Heart left ventricle (tissue), 16 donors: ENCODE measurements at regions of chr5 and their contacts with region 1.

Region 1: DNA sequence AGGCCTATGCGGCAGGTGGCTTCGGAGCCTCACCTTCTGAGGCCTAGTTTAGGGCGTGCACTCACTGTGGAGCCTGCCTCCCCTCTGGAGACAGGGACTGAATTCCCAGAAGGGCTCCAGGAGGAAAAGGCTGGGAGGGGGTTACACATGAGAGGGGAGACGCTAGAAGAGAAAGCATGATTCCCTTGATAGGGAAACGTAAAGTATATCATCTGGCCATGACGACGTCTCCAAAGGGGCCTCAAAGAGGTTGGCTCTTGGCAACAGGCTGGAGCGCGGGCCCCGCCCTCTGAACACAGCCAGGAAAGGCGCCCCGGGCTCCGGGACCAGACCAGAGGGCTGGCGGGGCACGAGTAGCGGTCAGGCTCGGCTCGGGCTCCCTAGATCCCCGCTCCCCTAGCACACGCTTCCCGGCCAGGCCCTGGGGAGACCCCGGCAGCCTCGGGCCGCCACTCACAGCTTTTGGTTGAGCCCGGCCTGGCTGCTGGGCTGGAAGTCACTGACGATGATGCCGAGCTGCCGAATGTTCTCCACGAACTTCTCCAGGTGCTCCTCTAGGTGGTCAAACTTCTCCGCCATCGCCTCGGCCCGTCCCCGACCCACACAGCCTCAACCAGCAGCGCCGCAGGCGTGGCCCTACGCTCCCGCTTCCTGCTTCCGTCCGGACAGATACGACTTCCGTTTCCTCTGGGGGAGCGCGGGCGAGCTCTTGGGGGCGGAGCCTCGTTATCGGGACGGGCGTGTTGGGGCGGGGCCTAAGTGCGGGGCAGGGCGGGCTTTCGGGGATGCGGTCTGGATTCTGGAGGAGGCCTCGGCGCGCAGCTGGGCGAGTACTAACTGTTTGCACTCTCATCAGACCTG is at the start of gene MED10:
- DNase-seq: peak; percentile 95 to 98 (median 97)
- ATAC-seq: peak; percentile 100
- H3K4me3 ChIP-seq: peak within 1 kb of the TSS; percentile 64 to 99 (median 98)
- H3K27ac ChIP-seq: peak within 1 kb of the TSS; percentile 60 to 95 (median 91)
- H3K4me1 ChIP-seq: peaks cover 0 to 26% (median 16%) of the 10 kb centered on the region in 12 donors
- H3K27me3 ChIP-seq: peaks cover 0 to 3% (median 0%) of the 10 kb centered on the region in 9 donors
- CTCF ChIP-seq: no peak
- POLR2A ChIP-seq: peak in 1 of 2 donors; percentile 73
- total RNA-seq, gene MED10: 13.2 to 30.7 (median 23.1) TPM

Region 2: DNA sequence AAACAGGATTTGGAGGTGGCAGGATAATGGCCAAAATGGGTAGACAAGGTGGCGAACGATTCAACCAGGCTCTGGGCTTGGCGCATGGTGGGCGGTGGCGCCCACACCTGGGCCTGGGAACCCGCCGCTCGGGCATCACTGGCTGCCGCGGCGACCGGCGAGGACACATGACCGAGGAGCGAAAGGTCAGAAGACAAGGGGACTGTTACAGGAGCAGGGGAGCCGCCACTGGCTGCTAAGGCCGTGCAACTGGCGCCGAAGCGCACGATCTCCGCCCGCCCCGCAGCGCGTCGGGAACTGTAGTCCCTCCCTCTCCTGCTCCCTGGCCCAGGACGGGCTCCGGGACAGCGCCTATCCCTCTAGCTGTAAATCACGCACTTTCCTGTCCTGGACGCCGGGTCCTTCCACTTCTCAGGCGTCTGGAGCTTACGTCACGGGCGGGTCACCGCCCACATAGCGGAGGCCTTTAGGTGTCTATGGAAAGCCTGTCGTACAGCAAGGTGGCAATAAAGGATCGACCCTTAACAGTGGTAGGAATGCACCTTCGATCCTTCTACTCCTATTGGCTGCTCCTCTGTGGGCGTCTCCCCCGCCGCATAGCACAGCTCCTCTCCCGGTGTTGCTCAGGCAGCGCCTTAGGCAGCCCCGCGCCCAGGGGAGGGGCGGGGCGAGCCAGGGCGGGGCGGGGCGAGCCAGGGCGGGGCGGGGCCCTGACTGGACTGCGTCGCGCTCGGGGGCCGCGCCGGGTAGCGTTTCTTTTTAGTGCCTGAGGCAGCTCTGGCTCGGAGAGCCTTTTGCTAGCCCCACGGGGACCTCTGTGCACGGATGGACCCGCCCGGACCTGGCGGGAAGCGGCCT is 955.9 kb before region 1 on chr5 and contains the start of gene ICE1:
- intact Hi-C with region 1: loop called in 1 of 10 experiments (anchors 5 kb)
- DNase-seq: peak; percentile 97 to 99 (median 98)
- ATAC-seq: peak; percentile 98 to 99 (median 99)
- H3K4me3 ChIP-seq: peak within 1 kb of the TSS; percentile 62 to 100 (median 94)
- H3K27ac ChIP-seq: peak within 1 kb of the TSS; percentile 92 to 100 (median 97)
- H3K4me1 ChIP-seq: peaks cover 7 to 51% (median 37%) of the 10 kb centered on the region in 12 donors
- H3K27me3 ChIP-seq: no peaks in the 10 kb centered on the region
- CTCF ChIP-seq: peak in 3 of 12 donors; percentile 12 to 18 (median 16)
- POLR2A ChIP-seq: peak in 1 of 2 donors; percentile 75
- total RNA-seq, gene ICE1: 15.0 to 21.4 (median 19.7) TPM

Region 3: GRCh38 chr5:6448622-6449464 is 70.7 kb after region 1 on chr5 and contains the start of gene UBE2QL1:
- intact Hi-C with region 1: loop called in 3 of 10 experiments (anchors 5 to 10 kb)
- DNase-seq: peak in 1 of 5 donors; percentile 40
- ATAC-seq: peak in 3 of 4 donors; percentile 52 to 63 (median 62)
- H3K4me3 ChIP-seq: peak within 1 kb of the TSS; percentile 39 to 76 (median 62)
- H3K27ac ChIP-seq: peak within 1 kb of the TSS in 11 of 12 donors; percentile 37 to 96 (median 80)
- H3K4me1 ChIP-seq: peaks cover 0 to 25% (median 10%) of the 10 kb centered on the region in 12 donors
- H3K27me3 ChIP-seq: peaks cover 0 to 40% (median 6%) of the 10 kb centered on the region in 9 donors
- CTCF ChIP-seq: no peak
- POLR2A ChIP-seq: no peak
- total RNA-seq, gene UBE2QL1: 9.8 to 32.0 (median 21.0) TPM

Region 4: DNA sequence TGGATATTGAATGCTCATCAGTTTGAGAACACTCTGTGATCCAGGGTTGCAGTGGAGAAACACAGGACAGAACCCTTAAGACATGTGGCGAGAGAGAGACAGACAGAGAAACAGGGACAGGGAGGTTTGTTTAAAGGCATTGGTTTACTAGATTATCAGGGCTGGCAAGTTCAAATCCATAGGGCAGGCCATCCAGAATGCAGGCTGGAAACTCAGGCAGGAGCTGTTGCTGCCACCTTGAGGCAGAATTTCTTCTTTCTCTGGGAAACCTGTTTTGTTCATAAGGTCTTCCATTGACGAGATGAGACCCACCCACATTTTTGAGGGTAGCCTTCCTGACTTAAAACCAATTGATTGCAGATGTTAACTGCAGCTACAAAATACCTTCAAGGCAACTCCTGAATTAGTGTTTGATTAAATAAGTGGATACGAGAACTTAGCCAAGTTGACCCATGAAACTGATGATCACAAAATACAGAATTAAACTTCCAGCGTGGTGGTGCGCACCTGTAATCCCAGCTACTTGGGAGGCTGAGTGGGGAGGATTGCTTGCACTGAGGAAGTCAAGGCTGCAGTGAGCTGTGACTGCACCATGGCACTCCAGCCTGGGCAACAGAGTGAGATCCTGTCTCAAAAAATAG is 198.8 kb after region 1 on chr5:
- intact Hi-C with region 1: loop called in 2 of 10 experiments (anchors 10 kb)
- DNase-seq: no peak
- ATAC-seq: peak in 2 of 4 donors; percentile 45 to 53
- H3K4me3 ChIP-seq: no peak overlapping the region
- H3K27ac ChIP-seq: no peak overlapping the region
- H3K4me1 ChIP-seq: peaks cover 0 to 16% (median 4%) of the 10 kb centered on the region in 12 donors
- H3K27me3 ChIP-seq: peaks cover 0 to 7% (median 0%) of the 10 kb centered on the region in 9 donors
- CTCF ChIP-seq: peak; percentile 26 to 63 (median 49)
- POLR2A ChIP-seq: no peak

Region 5: GRCh38 chr5:6632917-6633468 is 254.9 kb after region 1 on chr5 and contains the starts of genes NSUN2 and SRD5A1:
- intact Hi-C with region 1: loop called in 1 of 10 experiments (anchors 10 kb)
- DNase-seq: peak; percentile 92 to 96 (median 92)
- ATAC-seq: peak; percentile 97 to 99 (median 98)
- H3K4me3 ChIP-seq: peak within 1 kb of the TSS; percentile 75 to 99 (median 94)
- H3K27ac ChIP-seq: peak within 1 kb of the TSS; percentile 92 to 99 (median 97)
- H3K4me1 ChIP-seq: peaks cover 0 to 38% (median 25%) of the 10 kb centered on the region in 12 donors
- H3K27me3 ChIP-seq: no peaks in the 10 kb centered on the region
- CTCF ChIP-seq: no peak
- POLR2A ChIP-seq: peak in 1 of 2 donors; percentile 46
- total RNA-seq, gene NSUN2: 25.1 to 42.6 (median 34.0) TPM
- total RNA-seq, gene SRD5A1: 2.3 to 6.7 (median 4.0) TPM

Region 6: DNA sequence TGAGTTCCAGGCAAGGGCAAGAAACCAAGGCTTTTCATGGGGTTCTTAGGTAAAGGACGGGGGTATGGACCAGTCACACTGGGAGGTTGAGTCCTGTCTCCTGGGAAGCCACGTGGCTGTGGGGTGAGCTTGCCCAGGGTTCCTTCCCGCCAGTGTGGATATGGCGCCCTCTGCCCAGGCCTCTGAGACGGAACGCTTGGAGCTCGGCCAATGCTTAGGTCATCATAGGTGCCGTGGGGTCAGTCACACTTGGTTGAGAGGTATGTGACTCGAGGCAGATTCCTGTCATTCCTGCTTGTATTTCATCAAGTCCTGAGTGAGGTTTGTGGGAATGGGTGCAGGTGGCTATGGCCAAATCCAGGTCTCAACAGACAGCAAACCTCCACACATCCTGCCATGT is 381.3 kb after region 1 on chr5:
- intact Hi-C with region 1: loop called in 1 of 10 experiments (anchors 10 kb)
- DNase-seq: peak in 1 of 5 donors; percentile 24
- ATAC-seq: no peak
- H3K4me3 ChIP-seq: no peak overlapping the region
- H3K27ac ChIP-seq: no peak overlapping the region
- H3K4me1 ChIP-seq: peaks cover 0 to 8% (median 0%) of the 10 kb centered on the region in 12 donors
- H3K27me3 ChIP-seq: no peaks in the 10 kb centered on the region
- CTCF ChIP-seq: no peak
- POLR2A ChIP-seq: no peak